ENCODE measurements at regions of chr18 and their contacts with region 1.

Region 1: DNA sequence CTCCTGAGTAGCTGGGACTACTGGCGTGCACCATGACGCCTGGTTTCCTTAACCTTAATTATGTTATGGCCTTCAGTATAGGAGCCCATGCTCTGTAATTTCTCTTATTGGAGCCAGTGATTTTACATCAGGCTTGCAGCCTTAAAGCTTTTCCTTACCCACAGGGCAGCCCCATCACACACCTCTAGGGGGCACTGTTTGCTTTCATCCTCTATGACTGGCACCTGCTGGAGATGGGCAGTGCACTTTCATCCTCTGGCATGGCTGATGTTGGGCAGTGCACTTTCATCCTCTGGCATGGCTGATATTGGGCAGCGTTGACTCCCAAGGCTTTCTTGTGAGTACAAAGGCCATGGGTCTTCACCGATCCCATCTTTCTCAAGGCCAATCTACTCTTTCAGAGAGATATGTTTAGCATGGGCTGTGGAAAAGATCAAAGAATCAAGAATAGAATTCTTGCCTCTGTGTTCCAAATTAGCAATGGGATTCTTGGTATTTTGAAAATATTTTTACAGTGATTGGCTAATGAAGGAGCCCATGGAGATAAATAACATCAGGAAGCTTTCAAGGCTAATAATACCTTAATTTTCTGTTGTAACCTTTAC is 80.7 kb upstream of the MEX3C start:
- DNase-seq: peak; percentile 34 to 35
- H3K4me3 ChIP-seq: no peak overlapping the region
- H3K27ac ChIP-seq: no peak overlapping the region
- H3K4me1 ChIP-seq: no peaks in the 10 kb centered on the region
- H3K27me3 ChIP-seq: no peaks in the 10 kb centered on the region
- CTCF ChIP-seq: peak; percentile 86

Region 2: DNA sequence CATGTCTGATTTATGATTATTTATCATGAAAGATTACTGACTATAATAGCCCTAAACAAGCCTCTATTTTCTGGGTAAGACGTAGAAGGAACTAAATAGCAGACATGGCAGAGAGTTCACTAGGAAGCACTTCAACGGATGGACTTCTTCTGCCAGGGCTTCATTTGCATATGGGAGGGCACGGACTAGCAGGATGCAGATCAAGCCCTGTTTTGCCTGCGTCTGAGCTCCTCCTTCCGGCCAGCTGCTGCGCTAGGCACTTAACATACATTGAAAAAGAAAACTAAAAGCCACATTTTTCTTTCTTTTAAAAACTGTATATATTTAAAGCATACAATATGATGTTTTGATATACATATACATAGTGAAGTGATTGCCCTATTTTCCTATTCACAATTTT is 259.3 kb after region 1 on chr18:
- CTCF ChIA-PET with region 1: no interaction called
- POLR2A ChIA-PET with region 1: no interaction called
- intact Hi-C with region 1: loop called (anchors 1 kb)
- DNase-seq: peak in 1 of 2 experiments; percentile 10
- H3K4me3 ChIP-seq: no peak overlapping the region
- H3K27ac ChIP-seq: no peak overlapping the region
- H3K4me1 ChIP-seq: no peaks in the 10 kb centered on the region
- H3K27me3 ChIP-seq: no peaks in the 10 kb centered on the region
- CTCF ChIP-seq: no peak

Measured in PC-9 (cell line).